ENCODE measurements at regions of chr11 and their contacts with region 1.

Region 1: GRCh38 chr11:107810875-107811274 is 47.7 kb downstream of the SLC35F2 start:
- DNase-seq: no peak
- CTCF ChIP-seq: no peak

Region 2: GRCh38 chr11:107752949-107753822 is 57.7 kb before region 1 on chr11:
- CTCF ChIA-PET with region 1: no interaction called
- POLR2A ChIA-PET with region 1: no interaction called
- DNase-seq: no peak
- CTCF ChIP-seq: no peak

Region 3: GRCh38 chr11:107799218-107799859 is 11.5 kb before region 1 on chr11:
- CTCF ChIA-PET with region 1: interaction called, 13 read pairs
- POLR2A ChIA-PET with region 1: no interaction called
- DNase-seq: peak; percentile 74
- CTCF ChIP-seq: peak; percentile 82

Region 4: GRCh38 chr11:107821199-107821927 is 10.5 kb after region 1 on chr11:
- CTCF ChIA-PET with region 1: interaction called, 13 read pairs
- POLR2A ChIA-PET with region 1: no interaction called
- DNase-seq: no peak
- CTCF ChIP-seq: no peak